ENCODE measurements at regions of chr19 and their contacts with region 1.

Region 1: GRCh38 chr19:48646001-48646721 is at the start of gene CA11:
- DNase-seq: peak; percentile 95
- H3K4me3 Mint-ChIP-seq: peak within 1 kb of the TSS; percentile 78
- H3K27ac Mint-ChIP-seq: peak within 1 kb of the TSS; percentile 80
- H3K4me1 Mint-ChIP-seq: peaks cover 31% of the 10 kb centered on the region
- H3K27me3 Mint-ChIP-seq: no peaks in the 10 kb centered on the region
- total RNA-seq, gene CA11: 12.0 to 14.9 TPM

Region 2: GRCh38 chr19:48713864-48714758 is 68.0 kb after region 1 on chr19:
- CTCF ChIA-PET with region 1: interaction called, 3 read pairs
- intact Hi-C with region 1: loop called (anchors 2 kb)
- DNase-seq: peak; percentile 99
- H3K4me3 Mint-ChIP-seq: peak overlapping the region; percentile 86
- H3K27ac Mint-ChIP-seq: peak overlapping the region; percentile 58
- H3K4me1 Mint-ChIP-seq: peaks cover 11% of the 10 kb centered on the region
- H3K27me3 Mint-ChIP-seq: no peaks in the 10 kb centered on the region

Region 3: GRCh38 chr19:48784540-48784939 is 138.4 kb after region 1 on chr19:
- CTCF ChIA-PET with region 1: no interaction called
- intact Hi-C with region 1: loop called (anchors 1 kb)
- DNase-seq: no peak
- H3K4me3 Mint-ChIP-seq: no peak overlapping the region
- H3K27ac Mint-ChIP-seq: no peak overlapping the region
- H3K4me1 Mint-ChIP-seq: peaks cover 2% of the 10 kb centered on the region
- H3K27me3 Mint-ChIP-seq: peaks cover 3% of the 10 kb centered on the region

Region 4: GRCh38 chr19:48835734-48836088 is 189.6 kb after region 1 on chr19:
- CTCF ChIA-PET with region 1: no interaction called
- intact Hi-C with region 1: loop called (anchors 1 kb)
- DNase-seq: peak; percentile 98
- H3K4me3 Mint-ChIP-seq: peak overlapping the region; percentile 73
- H3K27ac Mint-ChIP-seq: no peak overlapping the region
- H3K4me1 Mint-ChIP-seq: peaks cover 20% of the 10 kb centered on the region
- H3K27me3 Mint-ChIP-seq: peaks cover 2% of the 10 kb centered on the region

Region 5: DNA sequence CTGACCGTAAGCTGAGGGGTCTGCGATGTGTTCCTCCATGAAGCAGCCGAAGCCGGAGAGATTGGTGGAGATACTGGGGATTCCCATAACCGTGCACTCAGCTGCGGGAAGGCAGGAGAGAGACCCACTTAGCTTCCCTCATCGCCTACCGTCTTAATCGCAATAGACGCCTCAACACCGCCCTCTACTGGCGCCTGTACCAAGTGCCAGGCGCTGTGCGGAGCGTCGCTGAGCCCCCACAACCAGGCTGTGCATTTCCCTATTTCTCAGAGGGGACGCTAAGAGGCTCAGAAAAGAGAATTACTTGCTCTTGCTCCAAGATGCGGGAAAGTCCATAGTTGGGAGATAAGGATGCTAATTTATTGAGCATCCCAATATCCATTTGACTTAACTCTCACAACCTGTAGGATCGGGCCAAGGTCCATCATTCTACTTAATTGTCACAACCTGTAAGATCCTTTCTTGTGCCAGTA is 324.8 kb after region 1 on chr19:
- CTCF ChIA-PET with region 1: no interaction called
- intact Hi-C with region 1: loop called (anchors 1 kb)
- DNase-seq: peak; percentile 91
- H3K4me3 Mint-ChIP-seq: no peak overlapping the region
- H3K27ac Mint-ChIP-seq: peak overlapping the region; percentile 28
- H3K4me1 Mint-ChIP-seq: peaks cover 21% of the 10 kb centered on the region
- H3K27me3 Mint-ChIP-seq: no peaks in the 10 kb centered on the region

Measured in activated naive CD4-positive, alpha-beta T cell treated with anti-CD3 and anti-CD28 coated beads for 36 hours (primary cell).